K562 (cell line): ENCODE measurements at regions of chr1 and their contacts with region 1.

Region 1: DNA sequence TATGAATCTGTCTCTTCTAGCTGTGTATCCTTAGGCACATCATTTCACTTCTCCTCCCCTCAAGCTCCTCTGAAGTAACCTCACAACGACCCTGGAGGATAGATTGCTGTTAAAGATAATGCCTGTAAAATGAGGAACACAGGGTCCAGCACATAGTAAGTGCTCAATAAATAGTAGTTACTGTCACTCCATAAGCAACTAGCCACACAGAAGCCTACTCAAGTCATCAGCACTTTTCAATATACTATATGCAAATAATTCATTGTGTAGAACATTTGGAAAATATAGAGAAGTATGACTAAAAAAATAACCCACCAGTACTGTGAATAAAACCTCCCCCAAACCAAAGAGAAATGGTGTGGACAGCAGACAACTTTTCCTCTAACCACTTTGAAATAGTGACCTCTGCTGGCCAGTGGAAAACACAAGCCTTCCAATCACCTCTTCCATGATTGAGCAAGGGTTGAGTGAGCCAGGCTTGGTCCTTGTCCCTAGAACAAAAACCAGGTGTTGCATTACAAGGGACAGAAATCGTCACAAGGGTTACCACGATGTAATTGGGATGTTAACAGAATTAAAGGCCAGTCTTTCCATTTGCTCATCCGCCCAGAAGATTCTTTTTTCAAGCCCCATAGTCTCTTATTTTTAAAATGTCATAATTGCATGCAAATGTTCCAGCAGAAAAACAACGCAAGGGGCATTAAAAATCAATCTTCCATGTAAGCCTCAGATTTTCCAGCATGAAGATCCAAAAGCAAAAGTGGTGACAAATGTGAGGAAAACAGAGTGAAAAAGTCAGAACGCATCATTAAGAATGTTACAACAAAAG is 15.7 kb upstream of the GLIS1 start:
- DNase-seq: peak; percentile 65 to 73 (median 68)
- ATAC-seq: peak; percentile 95
- H3K4me3 ChIP-seq: no peak overlapping the region
- H3K27ac ChIP-seq: no peak overlapping the region
- H3K4me1 ChIP-seq: no peaks in the 10 kb centered on the region
- H3K27me3 ChIP-seq: peaks cover 5 to 6% of the 10 kb centered on the region in 2 experiments; a peak in 1 of 5 replicates
- CTCF ChIP-seq: peak; percentile 74 to 83 (median 81)
- EP300 ChIP-seq: no peak
- POLR2A ChIP-seq: no peak
- RAD21 ChIP-seq: peak; percentile 63 to 87

Region 2: GRCh38 chr1:53715478-53715877 is 39.2 kb before region 1 on chr1:
- CTCF ChIA-PET with region 1: interaction called, 8 read pairs
- POLR2A ChIA-PET with region 1: no interaction called
- in situ Hi-C with region 1: no loop called
- intact Hi-C with region 1: loop called (anchors 1 kb)
- DNase-seq: peak; percentile 51 to 67 (median 58)
- ATAC-seq: peak; percentile 97
- H3K4me3 ChIP-seq: no peak overlapping the region
- H3K27ac ChIP-seq: no peak overlapping the region
- H3K4me1 ChIP-seq: no peaks in the 10 kb centered on the region
- H3K27me3 ChIP-seq: peaks cover 19 to 58% of the 10 kb centered on the region in 2 experiments
- CTCF ChIP-seq: peak; percentile 78 to 89 (median 79)
- EP300 ChIP-seq: no peak
- POLR2A ChIP-seq: no peak
- RAD21 ChIP-seq: peak; percentile 19 to 68; a peak in 2 of 4 replicates

Region 3: GRCh38 chr1:53771648-53772047 is 16.9 kb after region 1 on chr1:
- CTCF ChIA-PET with region 1: no interaction called
- POLR2A ChIA-PET with region 1: no interaction called
- in situ Hi-C with region 1: no loop called
- intact Hi-C with region 1: no loop called
- DNase-seq: no peak
- ATAC-seq: no peak
- H3K4me3 ChIP-seq: no peak overlapping the region
- H3K27ac ChIP-seq: no peak overlapping the region
- H3K4me1 ChIP-seq: no peaks in the 10 kb centered on the region
- H3K27me3 ChIP-seq: no peaks in the 10 kb centered on the region
- CTCF ChIP-seq: no peak
- EP300 ChIP-seq: no peak
- POLR2A ChIP-seq: no peak
- RAD21 ChIP-seq: no peak